Sigmoid colon (tissue), 7 donors: ENCODE measurements at regions of chr1 and their contacts with region 1.

Region 1: GRCh38 chr1:230797942-230798418 is 50.8 kb downstream of the CAPN9 start:
- DNase-seq: peak; percentile 87
- H3K4me3 ChIP-seq: no peak overlapping the region
- H3K27ac ChIP-seq: no peak overlapping the region
- H3K4me1 ChIP-seq: no peaks in the 10 kb centered on the region
- H3K27me3 ChIP-seq: no peaks in the 10 kb centered on the region
- CTCF ChIP-seq: peak; percentile 74 to 80 (median 76)
- EP300 ChIP-seq: no peak
- POLR2A ChIP-seq: no peak

Region 2: DNA sequence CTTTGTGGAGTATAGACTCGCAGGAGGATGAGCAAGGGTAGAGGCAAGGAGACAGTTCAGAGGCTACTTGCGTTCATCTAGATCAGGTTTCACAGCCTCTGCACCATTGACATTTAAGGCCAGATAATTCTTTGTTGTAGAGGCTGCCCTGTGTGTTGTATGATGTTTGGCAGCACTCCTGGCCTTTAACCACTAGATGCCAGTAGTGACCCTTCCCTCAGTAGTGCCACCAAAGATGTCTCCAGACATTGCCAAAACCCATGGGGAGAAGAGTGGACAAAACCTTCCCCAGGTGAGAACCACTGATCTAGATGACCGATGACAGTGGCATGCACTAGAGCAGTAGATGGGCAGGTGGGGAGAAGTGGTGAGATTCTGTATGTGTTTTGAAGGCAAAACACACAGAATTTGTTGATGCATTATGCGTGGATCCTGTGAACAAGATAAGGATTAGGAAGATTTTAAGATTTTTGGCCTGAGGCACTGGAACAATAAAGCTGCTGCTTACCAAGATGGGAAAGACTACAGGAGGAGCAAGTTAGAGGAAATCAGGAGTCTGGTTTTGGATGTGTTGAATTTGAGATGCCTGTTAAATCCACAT is 165.6 kb before region 1 on chr1:
- intact Hi-C with region 1: loop called (anchors 10 kb)
- DNase-seq: no peak
- H3K4me3 ChIP-seq: no peak overlapping the region
- H3K27ac ChIP-seq: no peak overlapping the region
- H3K4me1 ChIP-seq: no peaks in the 10 kb centered on the region
- H3K27me3 ChIP-seq: peaks cover 0 to 4% (median 0%) of the 10 kb centered on the region in 3 donors
- CTCF ChIP-seq: no peak
- EP300 ChIP-seq: no peak
- POLR2A ChIP-seq: no peak

Region 3: DNA sequence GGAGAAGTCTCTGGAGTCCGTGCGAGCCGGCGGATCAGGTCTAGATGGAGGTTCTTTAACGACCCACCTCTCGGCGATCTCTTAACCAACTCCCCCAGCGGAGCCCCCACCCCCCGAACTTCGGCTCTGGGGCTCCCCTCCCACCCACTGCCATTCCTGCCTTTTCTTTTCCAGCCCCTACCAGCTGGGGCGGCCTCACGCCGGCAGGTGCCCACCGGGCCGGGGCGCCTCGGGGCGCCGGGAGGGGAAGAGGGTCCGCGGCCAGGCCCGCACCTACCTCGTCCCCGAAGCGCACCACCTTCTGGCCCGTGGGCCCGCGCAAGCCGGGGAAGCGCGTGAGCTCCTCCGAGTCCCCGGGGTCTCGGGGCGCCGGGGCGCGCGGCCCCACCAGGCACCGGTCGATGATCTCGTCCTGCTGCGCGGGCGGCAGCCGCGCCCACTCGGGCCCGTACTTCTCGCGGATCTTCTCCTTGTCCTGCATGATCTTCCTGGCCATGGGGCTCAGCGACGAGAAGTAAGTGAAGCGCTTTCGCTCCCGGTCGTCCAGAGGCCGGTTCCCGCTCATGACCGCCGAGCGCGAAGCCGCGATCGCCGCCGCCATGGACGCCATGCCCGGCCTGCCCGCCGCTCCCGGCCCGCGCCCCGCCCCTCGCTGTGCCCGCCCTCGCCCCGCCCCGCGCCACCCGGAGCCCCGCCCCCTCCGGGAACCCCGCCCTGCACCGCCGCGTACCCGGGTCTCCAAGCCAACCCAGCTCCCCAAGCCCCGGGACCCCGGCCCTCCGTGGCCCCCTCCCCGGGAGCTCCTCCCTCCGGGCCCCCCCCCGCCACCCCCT is 70.1 kb after region 1 on chr1 and contains the start of gene C1orf198:
- intact Hi-C with region 1: loop called (anchors 5 kb)
- DNase-seq: peak; percentile 82
- H3K4me3 ChIP-seq: peak within 1 kb of the TSS; percentile 90 to 96 (median 92)
- H3K27ac ChIP-seq: peak within 1 kb of the TSS; percentile 90 to 95 (median 93)
- H3K4me1 ChIP-seq: peaks cover 0 to 54% (median 49%) of the 10 kb centered on the region in 4 donors
- H3K27me3 ChIP-seq: no peaks in the 10 kb centered on the region
- CTCF ChIP-seq: no peak
- EP300 ChIP-seq: no peak
- POLR2A ChIP-seq: peak; percentile 28 to 32
- total RNA-seq, gene C1orf198: 42.1 to 63.5 (median 55.5) TPM

Region 4: GRCh38 chr1:230917284-230918135 is 119.5 kb after region 1 on chr1:
- intact Hi-C with region 1: loop called (anchors 1 kb)
- DNase-seq: peak; percentile 75
- H3K4me3 ChIP-seq: no peak overlapping the region
- H3K27ac ChIP-seq: no peak overlapping the region
- H3K4me1 ChIP-seq: no peaks in the 10 kb centered on the region
- H3K27me3 ChIP-seq: no peaks in the 10 kb centered on the region
- CTCF ChIP-seq: peak; percentile 30 to 66 (median 44)
- EP300 ChIP-seq: no peak
- POLR2A ChIP-seq: no peak

Region 5: DNA sequence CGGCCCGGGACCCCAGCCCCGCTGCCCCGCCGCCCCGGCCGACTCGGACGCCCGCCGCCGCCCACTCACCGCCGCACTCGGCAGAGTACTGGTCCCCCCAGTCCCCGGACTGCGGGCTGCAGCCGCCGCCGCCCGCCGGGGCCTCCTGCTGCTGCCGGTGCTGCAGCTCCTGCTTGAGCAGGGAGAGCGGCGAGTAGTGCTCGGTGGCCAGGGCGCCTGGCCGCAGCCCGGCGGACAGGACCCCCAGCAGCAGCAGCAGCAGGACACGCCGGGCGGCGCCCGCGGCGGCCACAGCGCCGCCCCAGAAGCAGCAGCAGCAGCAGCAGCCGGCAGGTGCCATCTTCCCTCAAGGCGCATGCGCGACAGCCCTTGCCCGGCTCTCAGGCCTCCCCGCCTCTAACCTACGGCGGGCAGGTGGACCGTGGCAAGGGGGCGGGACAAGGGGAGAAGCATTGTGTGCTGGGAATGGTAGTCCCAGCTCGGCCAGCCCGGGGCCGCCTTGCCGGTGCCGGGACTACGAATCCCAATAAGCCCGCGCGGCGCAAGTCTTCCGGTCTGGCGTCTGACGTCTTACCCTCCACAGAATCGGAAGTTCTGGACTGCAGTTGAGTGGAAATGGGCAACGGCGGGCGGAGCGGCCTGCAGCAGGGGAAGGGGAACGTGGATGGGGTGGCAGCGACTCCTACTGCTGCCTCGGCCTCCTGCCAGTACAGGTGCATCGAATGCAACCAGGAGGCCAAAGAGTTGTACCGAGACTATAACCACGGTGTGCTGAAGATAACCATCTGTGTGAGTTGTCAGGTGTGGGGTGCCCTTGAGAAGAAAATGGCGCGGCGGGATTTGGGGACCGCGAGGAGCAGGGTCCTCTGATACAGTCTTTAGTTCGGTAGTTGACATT is 180.8 kb after region 1 on chr1 and contains the starts of genes ARV1 and TTC13:
- intact Hi-C with region 1: loop called (anchors 5 kb)
- DNase-seq: peak; percentile 98
- H3K4me3 ChIP-seq: peak within 1 kb of the TSS; percentile 65 to 95 (median 90)
- H3K27ac ChIP-seq: peak within 1 kb of the TSS; percentile 71 to 83 (median 80)
- H3K4me1 ChIP-seq: peaks cover 0 to 27% (median 17%) of the 10 kb centered on the region in 4 donors
- H3K27me3 ChIP-seq: no peaks in the 10 kb centered on the region
- CTCF ChIP-seq: no peak
- EP300 ChIP-seq: no peak
- POLR2A ChIP-seq: peak; percentile 25 to 76
- total RNA-seq, gene ARV1: 19.7 to 32.1 (median 22.8) TPM
- total RNA-seq, gene TTC13: 7.3 to 19.7 (median 16.3) TPM

Region 6: DNA sequence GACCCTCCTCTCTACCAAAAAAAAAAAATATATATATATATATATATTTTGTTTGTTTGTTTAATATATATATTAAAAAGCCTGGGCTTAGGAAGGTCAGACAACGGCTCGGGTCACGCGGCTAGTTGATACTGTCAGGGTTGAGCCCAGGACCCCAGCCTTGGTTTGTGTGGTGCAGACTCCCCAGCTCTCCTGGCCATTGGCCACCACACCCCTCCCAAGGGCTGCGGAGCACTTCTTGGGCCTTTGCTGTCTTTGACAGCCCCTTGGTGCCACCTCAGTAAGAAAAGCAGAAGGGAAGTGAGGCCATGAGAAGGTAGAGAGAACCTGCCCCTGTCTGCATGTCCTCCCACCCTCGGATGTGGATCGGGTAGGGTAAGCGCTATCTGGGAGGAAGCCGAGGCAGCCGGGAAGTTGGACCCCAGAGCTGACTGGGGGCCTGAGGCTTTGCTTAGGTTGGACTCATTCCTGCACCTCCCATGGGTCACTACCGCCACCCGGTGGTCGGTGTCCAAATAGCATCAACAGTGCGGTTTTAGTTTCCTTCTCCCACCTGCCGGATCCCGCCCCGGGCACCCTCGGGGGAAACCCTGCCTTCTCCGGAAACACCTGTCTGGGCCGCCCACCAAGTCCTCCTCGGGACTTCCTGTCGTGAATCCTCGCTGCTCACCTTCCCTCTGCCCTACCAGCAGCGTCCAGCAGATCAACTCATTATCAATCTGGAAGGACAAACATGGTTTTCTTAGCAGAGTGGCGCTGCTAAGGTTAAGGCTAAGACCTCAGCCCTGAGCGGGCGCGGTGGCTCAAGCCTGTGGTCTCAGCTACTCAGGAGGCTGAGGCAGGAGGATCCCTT is 413.3 kb after region 1 on chr1:
- intact Hi-C with region 1: loop called (anchors 2 kb)
- DNase-seq: peak; percentile 77
- H3K4me3 ChIP-seq: peak overlapping the region in 3 of 4 donors; percentile 31 to 43 (median 43)
- H3K27ac ChIP-seq: no peak overlapping the region
- H3K4me1 ChIP-seq: peaks cover 0 to 4% (median 2%) of the 10 kb centered on the region in 4 donors
- H3K27me3 ChIP-seq: peaks cover 0 to 13% (median 0%) of the 10 kb centered on the region in 3 donors
- CTCF ChIP-seq: peak; percentile 62 to 92 (median 78)
- EP300 ChIP-seq: no peak
- POLR2A ChIP-seq: no peak